Prostate gland (tissue), 2 donors: ENCODE measurements at regions of chr2 and their contacts with region 1.

Region 1: GRCh38 chr2:235493775-235494715 is at the start of gene AGAP1:
- DNase-seq: peak; percentile 88
- H3K4me3 ChIP-seq: peak within 1 kb of the TSS; percentile 50 to 63
- H3K27ac ChIP-seq: peak within 1 kb of the TSS; percentile 69 to 88
- H3K4me1 ChIP-seq: peaks cover 2% of the 10 kb centered on the region
- H3K27me3 ChIP-seq: no peaks in the 10 kb centered on the region
- CTCF ChIP-seq: no peak
- POLR2A ChIP-seq: peak; percentile 23
- total RNA-seq, gene AGAP1: 16.1 to 40.1 TPM

Region 2: GRCh38 chr2:235216901-235217300 is 277.1 kb before region 1 on chr2:
- intact Hi-C with region 1: no loop called
- DNase-seq: no peak
- H3K4me3 ChIP-seq: no peak overlapping the region
- H3K27ac ChIP-seq: no peak overlapping the region
- H3K4me1 ChIP-seq: no peaks in the 10 kb centered on the region
- H3K27me3 ChIP-seq: no peaks in the 10 kb centered on the region
- CTCF ChIP-seq: no peak
- POLR2A ChIP-seq: no peak

Region 3: DNA sequence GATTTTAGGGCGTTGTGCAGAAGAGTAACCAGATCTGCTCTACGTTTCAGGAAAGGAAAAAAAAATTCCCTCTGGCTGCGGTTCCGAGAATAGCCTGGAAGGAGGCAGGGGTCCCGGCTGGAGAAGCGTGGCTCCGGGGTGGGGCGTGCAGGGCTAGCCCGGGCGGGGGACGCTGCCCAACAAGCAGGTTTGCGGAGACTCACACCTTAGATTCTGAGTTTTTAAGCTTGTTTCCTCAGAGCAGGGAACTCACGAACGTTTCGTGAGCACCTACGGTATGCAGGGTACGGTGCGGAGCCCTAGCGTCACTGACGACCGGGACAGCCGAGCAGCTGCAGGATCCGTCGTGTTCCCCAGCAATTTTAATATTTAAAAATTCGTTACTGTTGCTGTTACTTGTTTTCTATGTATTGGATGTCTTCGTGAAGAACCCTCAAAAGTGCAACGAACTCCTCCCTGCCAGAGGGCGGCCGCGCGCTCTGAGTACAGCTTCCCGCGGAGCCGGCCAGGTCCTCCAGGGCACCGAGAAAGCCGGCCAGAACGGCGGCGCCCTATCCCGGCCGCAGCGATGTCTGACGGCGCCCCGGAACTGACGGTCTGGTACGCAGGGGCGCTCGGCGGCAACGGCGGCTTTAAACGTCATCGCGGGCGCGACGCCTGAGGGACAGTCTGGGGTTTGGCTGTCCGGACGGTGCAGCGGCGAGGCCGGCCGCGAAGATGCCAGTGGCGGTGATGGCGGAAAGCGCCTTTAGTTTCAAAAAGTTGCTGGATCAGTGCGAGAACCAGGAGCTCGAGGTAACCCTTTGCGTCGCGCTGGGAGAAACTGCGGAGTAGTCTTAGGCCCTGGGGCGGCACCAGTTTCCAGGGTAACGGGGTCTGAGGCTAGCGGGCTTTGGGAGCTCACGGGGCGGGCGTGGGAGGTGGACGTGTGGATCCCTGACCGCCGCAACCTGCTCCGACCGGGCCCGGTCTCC is 1591.5 kb after region 1 on chr2 and contains the start of gene COPS8:
- intact Hi-C with region 1: loop called (anchors 5 kb)
- DNase-seq: peak; percentile 94
- H3K4me3 ChIP-seq: peak within 1 kb of the TSS; percentile 58 to 70
- H3K27ac ChIP-seq: peak within 1 kb of the TSS; percentile 75 to 77
- H3K4me1 ChIP-seq: no peaks in the 10 kb centered on the region
- H3K27me3 ChIP-seq: no peaks in the 10 kb centered on the region
- CTCF ChIP-seq: peak in 3 of 4 experiments; percentile 23 to 53 (median 49)
- POLR2A ChIP-seq: peak; percentile 83
- total RNA-seq, gene COPS8: 73.1 to 90.0 TPM